Mammary epithelial cell (primary cell): ENCODE measurements at regions of chr12 and their contacts with region 1.

Region 1: GRCh38 chr12:52023182-52023975 is 16.6 kb downstream of the TAMALIN start:
- DNase-seq: peak; percentile 36
- H3K4me3 ChIP-seq: peak overlapping the region; percentile 47 to 54 (median 50)
- H3K27ac ChIP-seq: no peak overlapping the region
- H3K4me1 ChIP-seq: peaks cover 17% of the 10 kb centered on the region
- H3K27me3 ChIP-seq: no peaks in the 10 kb centered on the region
- CTCF ChIP-seq: peak; percentile 58 to 96

Region 2: GRCh38 chr12:51377099-51377984 is 646.0 kb before region 1 on chr12:
- CTCF ChIA-PET with region 1: no interaction called
- dilution Hi-C with region 1: no loop called
- in situ Hi-C with region 1: no loop called
- intact Hi-C with region 1: no loop called
- DNase-seq: no peak
- H3K4me3 ChIP-seq: no peak overlapping the region
- H3K27ac ChIP-seq: no peak overlapping the region
- H3K4me1 ChIP-seq: peaks cover 8% of the 10 kb centered on the region
- H3K27me3 ChIP-seq: no peaks in the 10 kb centered on the region
- CTCF ChIP-seq: no peak

Region 3: GRCh38 chr12:51891843-51892242 is 131.5 kb before region 1 on chr12:
- CTCF ChIA-PET with region 1: interaction called, 4 read pairs
- dilution Hi-C with region 1: no loop called
- in situ Hi-C with region 1: no loop called
- intact Hi-C with region 1: loop called (anchors 1 kb)
- DNase-seq: no peak
- H3K4me3 ChIP-seq: no peak overlapping the region
- H3K27ac ChIP-seq: no peak overlapping the region
- H3K4me1 ChIP-seq: no peaks in the 10 kb centered on the region
- H3K27me3 ChIP-seq: no peaks in the 10 kb centered on the region
- CTCF ChIP-seq: peak; percentile 24 to 40

Region 4: DNA sequence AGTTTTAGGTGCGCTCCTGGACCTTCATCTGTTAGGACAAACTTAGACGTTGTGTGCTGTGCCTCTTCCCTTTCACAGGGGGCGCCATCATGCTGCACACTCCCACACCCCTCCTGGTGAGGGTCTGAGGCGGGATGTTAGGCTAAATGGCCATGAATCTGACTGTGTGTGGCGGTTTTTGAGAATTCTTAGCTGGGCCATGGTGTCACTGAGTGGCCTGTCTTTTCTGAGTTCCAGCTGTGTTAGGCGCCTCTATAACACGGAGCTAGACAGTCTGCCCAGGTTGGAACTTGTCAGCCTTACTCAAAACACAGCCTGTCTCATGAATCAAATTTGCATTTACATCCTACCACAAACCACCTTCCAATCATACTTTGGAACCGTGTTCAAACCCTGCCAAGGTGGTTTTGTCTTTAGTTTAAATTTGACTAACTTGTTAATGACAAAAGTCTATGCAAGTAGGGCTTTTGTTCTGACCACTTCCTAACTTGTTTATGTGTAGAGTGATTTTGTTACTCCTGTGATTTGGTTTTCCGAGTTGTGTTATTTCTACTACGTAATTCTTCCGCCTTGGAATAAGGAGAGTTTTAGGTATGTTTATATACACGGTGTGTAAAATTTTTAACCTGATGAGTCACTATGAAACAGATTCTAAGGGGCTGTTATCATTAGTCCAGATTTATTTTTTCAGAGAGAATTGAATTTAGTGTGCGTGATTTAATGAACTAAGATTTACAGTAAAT is 52.3 kb before region 1 on chr12:
- CTCF ChIA-PET with region 1: no interaction called
- dilution Hi-C with region 1: loop called (anchors 5 kb)
- in situ Hi-C with region 1: no loop called
- intact Hi-C with region 1: no loop called
- DNase-seq: peak; percentile 87
- H3K4me3 ChIP-seq: peak overlapping the region in 2 of 3 experiments; percentile 26 to 29
- H3K27ac ChIP-seq: peak overlapping the region; percentile 64
- H3K4me1 ChIP-seq: peaks cover 43% of the 10 kb centered on the region
- H3K27me3 ChIP-seq: no peaks in the 10 kb centered on the region
- CTCF ChIP-seq: peak; percentile 52 to 75

Region 5: GRCh38 chr12:52004042-52004648 is 19.2 kb before region 1 on chr12:
- CTCF ChIA-PET with region 1: interaction called, 14 read pairs
- dilution Hi-C with region 1: no loop called
- in situ Hi-C with region 1: no loop called
- intact Hi-C with region 1: loop called (anchors 1 kb)
- DNase-seq: peak; percentile 40
- H3K4me3 ChIP-seq: no peak overlapping the region
- H3K27ac ChIP-seq: no peak overlapping the region
- H3K4me1 ChIP-seq: peaks cover 6% of the 10 kb centered on the region
- H3K27me3 ChIP-seq: peaks cover 19% of the 10 kb centered on the region
- CTCF ChIP-seq: peak; percentile 66 to 78

Region 6: GRCh38 chr12:52069327-52070184 is 46.2 kb after region 1 on chr12 and contains the start of gene ATG101:
- CTCF ChIA-PET with region 1: interaction called, 5 read pairs
- dilution Hi-C with region 1: no loop called
- in situ Hi-C with region 1: no loop called
- intact Hi-C with region 1: loop called (anchors 1 kb)
- DNase-seq: peak; percentile 92
- H3K4me3 ChIP-seq: peak within 1 kb of the TSS; percentile 94 to 99 (median 98)
- H3K27ac ChIP-seq: peak within 1 kb of the TSS; percentile 97
- H3K4me1 ChIP-seq: peaks cover 20% of the 10 kb centered on the region
- H3K27me3 ChIP-seq: no peaks in the 10 kb centered on the region
- CTCF ChIP-seq: peak; percentile 61 to 87
- total RNA-seq, gene ATG101: 44.8 to 59.4 TPM

Region 7: DNA sequence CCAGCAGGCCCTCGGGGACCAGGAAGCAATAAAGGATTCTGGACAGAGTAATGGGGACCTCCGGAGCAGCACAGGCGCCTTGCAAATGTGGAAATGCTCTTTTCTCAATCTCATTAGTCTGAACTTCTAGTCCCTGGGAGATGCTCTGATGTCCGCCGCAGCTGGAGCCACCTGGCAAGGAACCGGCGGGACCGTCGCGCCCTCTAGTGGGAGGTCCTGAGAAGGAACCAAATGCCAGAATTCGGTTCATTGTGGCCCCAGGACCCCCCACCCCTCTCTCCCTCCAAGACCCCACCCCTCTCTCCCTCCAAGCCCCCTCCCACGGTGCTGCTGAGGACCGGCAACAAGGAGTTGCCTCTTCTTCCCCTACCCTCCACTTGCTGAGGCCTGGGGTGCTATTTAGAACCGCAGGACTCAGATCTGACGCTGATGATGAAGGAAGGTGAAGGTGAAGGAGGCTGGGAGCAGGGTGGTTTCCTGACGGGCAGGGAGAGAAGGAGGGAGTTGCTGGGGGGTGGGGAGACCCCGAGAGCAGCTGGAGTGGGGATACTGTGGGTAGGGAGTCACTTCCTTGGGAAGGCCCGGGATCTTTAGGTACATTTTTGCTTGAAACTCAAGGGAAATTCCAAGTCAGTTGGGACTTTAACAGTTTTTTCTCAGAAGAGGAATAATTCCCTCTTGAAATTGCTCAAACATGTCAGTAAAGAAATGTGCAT is 98.6 kb after region 1 on chr12:
- CTCF ChIA-PET with region 1: interaction called, 23 read pairs
- dilution Hi-C with region 1: loop called (anchors 5 kb)
- in situ Hi-C with region 1: loop called (anchors 5 kb)
- intact Hi-C with region 1: loop called (anchors 1 kb)
- DNase-seq: no peak
- H3K4me3 ChIP-seq: no peak overlapping the region
- H3K27ac ChIP-seq: no peak overlapping the region
- H3K4me1 ChIP-seq: peaks cover 5% of the 10 kb centered on the region
- H3K27me3 ChIP-seq: no peaks in the 10 kb centered on the region
- CTCF ChIP-seq: peak; percentile 69 to 82

Region 8: DNA sequence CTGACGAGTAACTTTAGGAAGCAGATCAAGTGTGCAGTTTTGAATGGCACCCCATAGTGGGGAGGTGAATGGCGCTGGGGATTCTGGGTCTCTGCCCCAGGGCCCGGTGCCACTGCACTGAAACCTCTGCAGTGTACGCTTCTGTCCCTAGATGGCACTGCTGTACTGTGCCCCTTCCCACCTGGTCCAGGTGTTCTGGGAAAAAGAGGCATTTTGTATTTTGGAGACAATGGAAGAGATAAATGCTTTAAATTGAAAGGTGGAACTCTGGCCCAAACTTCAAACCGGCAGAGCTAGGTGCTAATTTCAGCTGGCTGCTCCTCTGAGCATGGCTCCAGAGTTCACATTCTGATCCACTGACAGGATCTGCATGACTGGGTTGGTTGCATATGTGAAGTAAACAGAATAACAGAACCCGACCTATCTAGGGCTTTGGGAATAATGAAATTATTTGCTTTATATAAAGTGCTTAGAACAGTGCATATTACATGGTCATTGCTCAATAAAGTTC is 116.2 kb after region 1 on chr12:
- CTCF ChIA-PET with region 1: no interaction called
- dilution Hi-C with region 1: no loop called
- in situ Hi-C with region 1: no loop called
- intact Hi-C with region 1: no loop called
- DNase-seq: peak; percentile 53
- H3K4me3 ChIP-seq: no peak overlapping the region
- H3K27ac ChIP-seq: no peak overlapping the region
- H3K4me1 ChIP-seq: peaks cover 15% of the 10 kb centered on the region
- H3K27me3 ChIP-seq: no peaks in the 10 kb centered on the region
- CTCF ChIP-seq: peak; percentile 98

Region 9: GRCh38 chr12:52171950-52172512 is 148.7 kb after region 1 on chr12:
- CTCF ChIA-PET with region 1: no interaction called
- dilution Hi-C with region 1: no loop called
- in situ Hi-C with region 1: no loop called
- intact Hi-C with region 1: no loop called
- DNase-seq: peak; percentile 70
- H3K4me3 ChIP-seq: no peak overlapping the region
- H3K27ac ChIP-seq: no peak overlapping the region
- H3K4me1 ChIP-seq: peaks cover 20% of the 10 kb centered on the region
- H3K27me3 ChIP-seq: no peaks in the 10 kb centered on the region
- CTCF ChIP-seq: peak; percentile 48 to 56